Activated CD8-positive, alpha-beta T cell treated with anti-CD3 and anti-CD28 coated beads, Interleukin-2, amount 10 ng/mL, durations not matched to agents 7 days and 5 days (primary cell): ENCODE measurements at regions of chr1 and their contacts with region 1.

Region 1: GRCh38 chr1:154669464-154670282 is 61.7 kb upstream of the ADAR start:
- DNase-seq: peak; percentile 82
- ATAC-seq: peak; percentile 100
- H3K4me3 Mint-ChIP-seq: no peak overlapping the region
- H3K27ac Mint-ChIP-seq: no peak overlapping the region
- H3K4me1 Mint-ChIP-seq: peaks cover 12% of the 10 kb centered on the region
- H3K27me3 Mint-ChIP-seq: peaks cover 2% of the 10 kb centered on the region

Region 2: GRCh38 chr1:154485106-154485505 is 184.6 kb before region 1 on chr1:
- CTCF ChIA-PET with region 1: no interaction called
- POLR2A ChIA-PET with region 1: no interaction called
- DNase-seq: no peak
- ATAC-seq: no peak
- H3K4me3 Mint-ChIP-seq: no peak overlapping the region
- H3K27ac Mint-ChIP-seq: no peak overlapping the region
- H3K4me1 Mint-ChIP-seq: no peaks in the 10 kb centered on the region
- H3K27me3 Mint-ChIP-seq: peaks cover 12% of the 10 kb centered on the region

Region 3: GRCh38 chr1:154747740-154748404 is 78.2 kb after region 1 on chr1:
- CTCF ChIA-PET with region 1: interaction called, 41 read pairs
- POLR2A ChIA-PET with region 1: no interaction called
- DNase-seq: peak; percentile 74
- ATAC-seq: peak; percentile 79
- H3K4me3 Mint-ChIP-seq: peak overlapping the region; percentile 69
- H3K27ac Mint-ChIP-seq: peak overlapping the region; percentile 90
- H3K4me1 Mint-ChIP-seq: peaks cover 74% of the 10 kb centered on the region
- H3K27me3 Mint-ChIP-seq: peaks cover 18% of the 10 kb centered on the region

Region 4: DNA sequence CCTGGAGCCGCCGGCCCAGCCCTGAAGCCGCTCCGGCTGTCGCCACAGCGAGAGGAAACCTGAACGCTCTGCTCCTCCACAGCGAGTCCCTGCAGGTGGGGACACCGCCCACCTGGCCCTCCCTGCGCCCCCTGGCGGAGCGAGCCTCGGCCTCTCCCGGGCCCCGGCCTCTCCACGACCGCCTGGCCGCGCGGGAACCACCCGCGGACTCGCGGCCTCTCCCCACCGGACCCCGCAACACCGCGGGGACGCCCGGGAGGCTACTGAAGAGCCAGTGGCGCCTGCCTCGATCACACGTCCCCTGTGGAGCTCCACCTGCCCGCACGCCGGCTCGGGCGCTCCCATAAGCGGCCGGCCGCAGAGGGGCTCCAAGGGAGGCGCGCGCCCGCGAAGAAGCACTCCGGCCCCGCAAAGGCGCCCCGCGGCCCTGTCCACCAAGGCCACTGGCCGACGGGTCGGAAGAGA is 90.8 kb after region 1 on chr1:
- CTCF ChIA-PET with region 1: interaction called, 36 read pairs
- POLR2A ChIA-PET with region 1: no interaction called
- DNase-seq: peak; percentile 87
- ATAC-seq: peak; percentile 93
- H3K4me3 Mint-ChIP-seq: peak overlapping the region; percentile 53
- H3K27ac Mint-ChIP-seq: no peak overlapping the region
- H3K4me1 Mint-ChIP-seq: peaks cover 45% of the 10 kb centered on the region
- H3K27me3 Mint-ChIP-seq: peaks cover 21% of the 10 kb centered on the region

Region 5: GRCh38 chr1:154791292-154792166 is 121.9 kb after region 1 on chr1:
- CTCF ChIA-PET with region 1: interaction called, 17 read pairs
- POLR2A ChIA-PET with region 1: no interaction called
- DNase-seq: peak; percentile 93
- ATAC-seq: peak; percentile 98
- H3K4me3 Mint-ChIP-seq: peak overlapping the region; percentile 52
- H3K27ac Mint-ChIP-seq: peak overlapping the region; percentile 89
- H3K4me1 Mint-ChIP-seq: peaks cover 35% of the 10 kb centered on the region
- H3K27me3 Mint-ChIP-seq: peaks cover 17% of the 10 kb centered on the region

Region 6: DNA sequence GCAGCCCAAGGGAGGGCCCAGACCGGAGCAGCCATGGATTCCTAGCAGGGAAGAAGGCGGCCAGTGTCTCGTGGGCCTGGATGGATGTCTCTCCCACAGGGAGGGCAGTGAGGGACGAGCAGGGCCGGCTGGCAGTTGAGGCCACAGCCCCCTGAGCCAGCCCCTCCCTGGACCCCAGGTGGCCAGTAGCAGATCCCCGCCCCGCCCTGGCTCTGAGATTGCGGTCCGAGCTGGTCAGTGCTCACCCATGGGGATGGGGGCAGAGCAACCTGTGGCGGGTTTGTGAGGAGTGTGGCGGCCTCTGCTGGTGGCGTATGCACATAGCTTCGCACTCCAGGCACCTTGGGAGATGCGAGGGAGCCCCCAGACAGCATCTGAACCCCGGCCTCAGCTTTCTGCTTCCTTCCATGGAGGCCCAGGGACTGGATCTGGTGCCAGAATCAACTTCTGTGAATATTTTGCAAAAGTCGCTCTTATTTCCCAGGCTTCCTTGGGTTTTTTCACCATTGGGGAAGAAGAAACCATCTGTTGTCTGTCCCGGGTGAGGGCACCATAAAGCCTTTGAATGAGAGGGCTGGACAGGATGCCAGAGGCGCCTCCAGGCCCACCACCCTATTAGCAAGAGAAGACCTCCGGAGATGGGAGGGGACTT is 208.8 kb after region 1 on chr1:
- CTCF ChIA-PET with region 1: interaction called, 91 read pairs
- POLR2A ChIA-PET with region 1: no interaction called
- DNase-seq: peak; percentile 78
- ATAC-seq: peak; percentile 92
- H3K4me3 Mint-ChIP-seq: no peak overlapping the region
- H3K27ac Mint-ChIP-seq: no peak overlapping the region
- H3K4me1 Mint-ChIP-seq: no peaks in the 10 kb centered on the region
- H3K27me3 Mint-ChIP-seq: peaks cover 2% of the 10 kb centered on the region

Region 7: DNA sequence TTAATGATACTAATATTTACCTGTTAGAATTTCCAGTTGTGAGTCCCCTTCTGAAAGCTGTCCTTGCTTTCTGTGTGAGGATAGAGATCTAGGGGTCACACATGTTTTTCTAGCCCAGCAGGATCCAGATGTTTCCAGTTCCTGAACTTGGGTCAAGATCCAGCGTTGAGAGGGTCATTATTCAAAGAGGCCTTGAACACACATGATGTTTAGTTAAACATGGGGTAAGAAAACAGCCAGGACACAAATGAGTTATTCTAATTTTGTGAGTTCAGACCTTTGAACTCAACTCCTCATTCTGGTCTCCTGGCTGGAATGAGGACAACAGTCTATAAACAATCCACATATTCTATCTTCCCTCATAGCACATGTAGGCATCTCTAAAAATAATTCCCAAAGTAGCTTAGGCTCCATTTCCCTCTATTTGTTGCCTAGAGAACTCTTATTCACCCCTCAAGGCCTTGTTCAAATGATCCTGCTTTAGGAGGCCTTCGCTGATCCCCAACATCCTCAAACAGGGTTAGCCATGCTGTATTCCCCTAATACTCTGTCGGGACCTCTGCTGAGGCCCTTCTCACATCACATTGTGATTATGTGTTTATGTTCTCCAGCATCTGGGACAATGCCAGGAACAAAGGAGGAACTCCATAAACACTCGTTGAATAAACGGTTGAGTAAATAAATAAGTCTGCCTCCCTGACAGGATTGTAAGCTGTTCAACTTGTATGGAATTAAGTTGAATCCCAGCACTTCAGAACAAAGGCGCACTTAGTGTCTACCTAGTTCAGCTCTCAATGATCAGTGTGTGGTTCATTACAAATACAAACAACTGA is 215.4 kb after region 1 on chr1:
- CTCF ChIA-PET with region 1: interaction called, 17 read pairs
- POLR2A ChIA-PET with region 1: no interaction called
- DNase-seq: no peak
- ATAC-seq: no peak
- H3K4me3 Mint-ChIP-seq: no peak overlapping the region
- H3K27ac Mint-ChIP-seq: no peak overlapping the region
- H3K4me1 Mint-ChIP-seq: peaks cover 18% of the 10 kb centered on the region
- H3K27me3 Mint-ChIP-seq: peaks cover 2% of the 10 kb centered on the region

Region 8: GRCh38 chr1:154936555-154937084 is 266.9 kb after region 1 on chr1 and contains the start of gene PMVK:
- CTCF ChIA-PET with region 1: interaction called, 14 read pairs
- POLR2A ChIA-PET with region 1: no interaction called
- DNase-seq: peak; percentile 98
- ATAC-seq: peak; percentile 86
- H3K4me3 Mint-ChIP-seq: peak within 1 kb of the TSS; percentile 95
- H3K27ac Mint-ChIP-seq: peak within 1 kb of the TSS; percentile 96
- H3K4me1 Mint-ChIP-seq: peaks cover 56% of the 10 kb centered on the region
- H3K27me3 Mint-ChIP-seq: no peaks in the 10 kb centered on the region
- total RNA-seq, gene PMVK: 40.9 to 43.8 TPM